Pancreas (tissue), 10 donors: ENCODE measurements at regions of chr18 and their contacts with region 1.

Region 1: GRCh38 chr18:5395860-5396448 is 100.4 kb upstream of the ZBTB14 start:
- DNase-seq: no peak
- ATAC-seq: no peak
- H3K4me3 ChIP-seq: no peak overlapping the region
- H3K27ac ChIP-seq: no peak overlapping the region
- H3K4me1 ChIP-seq: no peaks in the 10 kb centered on the region
- H3K27me3 ChIP-seq: no peaks in the 10 kb centered on the region
- CTCF ChIP-seq: no peak

Region 2: DNA sequence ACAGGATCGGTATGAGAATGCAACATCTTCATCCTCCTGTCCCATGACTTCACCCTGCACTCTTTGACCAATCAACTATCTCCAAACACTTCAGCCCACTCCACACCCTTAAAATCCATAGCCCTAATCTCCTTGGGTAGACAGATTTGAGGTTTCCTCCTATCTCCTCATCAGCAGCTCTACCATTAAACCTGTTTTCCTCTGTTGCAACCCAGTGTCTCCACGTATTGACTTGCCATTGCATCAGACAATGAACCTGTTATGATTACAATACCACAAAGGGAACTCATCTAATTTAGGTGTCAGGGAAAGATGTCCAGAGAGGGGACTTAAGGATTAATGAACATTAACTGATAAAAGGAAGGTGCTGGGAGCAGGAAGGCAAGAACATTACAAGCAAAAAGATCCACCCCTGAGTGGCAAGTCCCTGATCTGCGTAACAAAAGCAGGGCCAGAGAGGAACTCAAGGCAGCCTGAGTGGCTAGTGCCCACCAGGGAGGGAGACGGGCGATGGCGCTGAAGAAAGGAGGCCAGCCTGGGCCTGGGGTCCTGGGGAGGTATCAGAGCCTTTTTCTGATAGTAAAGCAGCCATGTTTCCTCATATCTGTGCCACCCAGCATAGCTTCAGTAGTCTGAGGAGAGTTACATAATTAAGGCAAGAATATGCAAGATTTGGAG is 243.5 kb before region 1 on chr18:
- intact Hi-C with region 1: loop called in 1 of 3 experiments (anchors 5 kb)
- DNase-seq: no peak
- ATAC-seq: no peak
- H3K4me3 ChIP-seq: no peak overlapping the region
- H3K27ac ChIP-seq: no peak overlapping the region
- H3K4me1 ChIP-seq: no peaks in the 10 kb centered on the region
- H3K27me3 ChIP-seq: no peaks in the 10 kb centered on the region
- CTCF ChIP-seq: no peak